OCI-LY7 (cell line): ENCODE measurements at regions of chr5 and their contacts with region 1.

Region 1: GRCh38 chr5:107337281-107337680 is 333.5 kb downstream of the EFNA5 start:
- DNase-seq: no peak
- H3K4me3 ChIP-seq: no peak overlapping the region
- H3K27ac ChIP-seq: no peak overlapping the region
- H3K4me1 ChIP-seq: no peaks in the 10 kb centered on the region
- CTCF ChIP-seq: no peak

Region 2: DNA sequence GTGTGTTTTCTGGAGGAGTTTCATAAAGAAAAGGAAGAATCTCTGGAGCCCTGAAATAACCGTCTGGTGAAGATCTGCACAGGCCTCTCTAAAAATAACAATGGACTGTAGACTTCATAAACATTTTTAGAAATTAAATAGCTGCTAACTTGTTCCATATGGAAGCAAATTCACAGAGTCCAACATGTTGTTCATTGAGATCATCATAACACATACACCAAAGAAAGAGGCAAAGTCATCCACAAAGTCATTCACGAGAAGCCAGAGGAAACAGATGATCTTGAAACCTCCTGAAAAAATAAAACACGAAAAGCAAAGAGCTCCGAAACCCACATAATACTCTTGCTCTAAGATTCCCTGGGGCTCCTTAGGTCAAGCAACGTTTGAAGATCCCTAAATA is 14.3 kb before region 1 on chr5:
- CTCF ChIA-PET with region 1: no interaction called
- POLR2A ChIA-PET with region 1: interaction called, 15 read pairs
- intact Hi-C with region 1: no loop called
- DNase-seq: no peak
- H3K4me3 ChIP-seq: no peak overlapping the region
- H3K27ac ChIP-seq: no peak overlapping the region
- H3K4me1 ChIP-seq: peaks cover 8% of the 10 kb centered on the region
- CTCF ChIP-seq: no peak

Region 3: DNA sequence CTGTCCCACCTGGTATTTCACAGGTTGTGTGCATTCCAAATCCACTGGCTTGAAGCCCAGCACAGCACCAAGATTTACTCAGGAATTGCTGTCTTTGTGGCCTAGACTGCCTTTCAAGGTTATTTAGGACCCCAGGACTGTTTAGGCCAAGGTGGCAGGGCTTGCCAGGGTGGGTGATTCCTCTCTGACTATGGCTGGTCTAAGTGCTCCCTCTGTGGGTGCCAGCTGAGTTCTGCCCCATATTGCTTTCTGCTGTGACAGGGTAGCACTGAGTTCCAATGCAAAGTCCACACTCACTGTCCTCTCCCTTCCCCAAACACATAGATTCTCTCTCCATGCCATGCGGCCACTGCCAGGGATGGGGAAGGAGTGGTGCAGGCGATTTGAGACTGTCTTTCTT is 15.3 kb after region 1 on chr5:
- CTCF ChIA-PET with region 1: no interaction called
- POLR2A ChIA-PET with region 1: interaction called, 12 read pairs
- intact Hi-C with region 1: no loop called
- DNase-seq: no peak
- H3K4me3 ChIP-seq: no peak overlapping the region
- H3K27ac ChIP-seq: no peak overlapping the region
- H3K4me1 ChIP-seq: no peaks in the 10 kb centered on the region
- CTCF ChIP-seq: peak; percentile 26; the same call in 1 of the 2 replicates

Region 4: DNA sequence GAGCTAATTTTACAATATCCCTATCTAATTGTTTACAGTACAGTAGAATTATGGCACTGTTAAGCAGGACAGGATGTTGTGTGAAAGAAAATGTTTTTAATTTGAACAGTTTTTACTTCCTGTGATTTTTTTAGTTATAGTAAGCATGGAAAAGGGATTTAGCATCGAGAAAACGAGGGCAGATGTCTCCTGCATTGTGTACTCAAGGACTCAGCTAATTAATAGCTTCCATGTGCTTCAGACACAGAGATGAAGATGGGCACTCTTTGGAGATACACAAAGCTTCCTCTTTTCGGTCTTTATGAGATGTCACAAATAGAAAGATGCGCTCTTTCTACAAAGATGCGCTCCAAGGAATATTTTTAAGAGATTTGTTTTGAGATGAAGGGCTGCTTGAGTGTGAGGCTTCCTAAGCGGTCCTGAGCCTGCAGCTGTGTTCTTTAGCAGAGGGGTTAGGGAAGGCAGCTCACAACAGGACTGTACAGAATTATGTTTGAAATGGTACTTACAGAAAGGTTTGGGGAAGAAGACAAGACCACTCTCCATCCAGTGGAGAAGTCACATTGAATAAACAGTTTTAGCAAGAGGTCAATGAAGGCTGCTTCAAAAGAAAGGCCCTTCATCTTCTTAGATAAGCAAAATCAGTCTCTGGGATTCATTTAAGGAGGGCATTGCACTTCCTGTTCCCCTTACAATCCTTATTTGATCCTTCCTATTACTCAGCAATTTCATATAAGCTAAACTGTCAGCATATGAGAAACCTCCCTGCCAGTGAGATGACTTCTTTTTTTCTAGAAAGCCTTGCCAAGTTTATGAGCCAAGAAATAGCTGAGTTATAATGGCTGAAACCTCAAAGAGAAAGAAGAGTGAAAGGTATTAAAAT is 22.0 kb after region 1 on chr5:
- CTCF ChIA-PET with region 1: no interaction called
- POLR2A ChIA-PET with region 1: interaction called, 12 read pairs
- intact Hi-C with region 1: no loop called
- DNase-seq: peak; percentile 29
- H3K4me3 ChIP-seq: no peak overlapping the region
- H3K27ac ChIP-seq: peak overlapping the region; percentile 21
- H3K4me1 ChIP-seq: peaks cover 30% of the 10 kb centered on the region
- CTCF ChIP-seq: no peak

Region 5: GRCh38 chr5:107436201-107436600 is 98.9 kb after region 1 on chr5:
- CTCF ChIA-PET with region 1: no interaction called
- POLR2A ChIA-PET with region 1: no interaction called
- intact Hi-C with region 1: no loop called
- DNase-seq: no peak
- H3K4me3 ChIP-seq: no peak overlapping the region
- H3K27ac ChIP-seq: no peak overlapping the region
- H3K4me1 ChIP-seq: peaks cover 33% of the 10 kb centered on the region
- CTCF ChIP-seq: no peak